Motor neuron (in vitro differentiated cells): ENCODE measurements at regions of chr7 and their contacts with region 1.

Region 1: DNA sequence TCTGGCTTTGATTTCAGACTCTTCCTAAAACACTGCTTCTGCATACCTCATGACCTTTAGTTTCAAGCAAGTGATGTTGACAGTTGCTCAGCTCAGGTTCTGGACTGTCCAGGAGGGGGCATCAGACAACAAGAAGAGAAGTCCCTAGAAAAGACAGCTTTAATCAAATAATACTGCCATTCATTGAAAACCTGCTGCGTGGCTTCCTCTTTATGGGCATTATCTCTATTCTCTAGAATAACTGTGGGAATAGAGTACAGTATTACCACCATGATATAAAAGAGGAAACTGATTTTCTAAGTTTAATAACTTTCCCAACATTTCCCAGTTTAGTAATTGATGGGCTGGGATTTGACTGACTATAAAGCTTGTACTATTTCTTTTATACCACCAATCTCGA is 170.4 kb downstream of the SNX13 start:
- ATAC-seq: peak in 7 of 8 experiments; percentile 23 to 82 (median 51)
- H3K4me3 ChIP-seq: no peak overlapping the region
- H3K27ac ChIP-seq: no peak overlapping the region
- H3K4me1 ChIP-seq: no peaks in the 10 kb centered on the region

Region 2: DNA sequence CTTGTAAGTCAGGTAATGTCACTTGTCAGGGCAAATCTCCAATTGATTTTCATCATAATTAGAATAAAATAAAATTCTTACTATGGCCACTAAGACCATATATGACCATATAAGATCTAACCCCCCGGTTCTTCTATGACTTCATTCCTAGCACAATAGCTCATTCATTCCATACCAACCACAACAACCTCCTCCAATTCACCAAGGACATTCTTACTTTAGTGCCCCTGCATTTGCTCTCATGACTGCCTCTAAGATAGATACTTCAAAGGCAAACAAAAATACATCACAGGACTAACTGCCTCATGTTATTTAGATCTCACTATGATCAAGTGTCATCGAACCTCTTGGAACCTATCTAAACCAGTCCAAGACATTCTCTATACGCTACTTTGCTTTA is 79.6 kb after region 1 on chr7:
- in situ Hi-C with region 1: no loop called
- ATAC-seq: no peak
- H3K4me3 ChIP-seq: no peak overlapping the region
- H3K27ac ChIP-seq: no peak overlapping the region
- H3K4me1 ChIP-seq: no peaks in the 10 kb centered on the region

Region 3: GRCh38 chr7:17940302-17940883 is 170.5 kb after region 1 on chr7 and contains the start of gene SNX13:
- in situ Hi-C with region 1: loop called in 1 of 9 experiments (anchors 10 kb)
- ATAC-seq: peak; percentile 89 to 98 (median 96)
- H3K4me3 ChIP-seq: peak within 1 kb of the TSS; percentile 86 to 99 (median 93)
- H3K27ac ChIP-seq: peak within 1 kb of the TSS; percentile 92 to 98
- H3K4me1 ChIP-seq: peaks cover 14 to 23% of the 10 kb centered on the region in 2 donors
- total RNA-seq, gene SNX13: 21.5 to 45.5 (median 29.2) TPM